ENCODE measurements at regions of chr10 and their contacts with region 1.

Region 1: DNA sequence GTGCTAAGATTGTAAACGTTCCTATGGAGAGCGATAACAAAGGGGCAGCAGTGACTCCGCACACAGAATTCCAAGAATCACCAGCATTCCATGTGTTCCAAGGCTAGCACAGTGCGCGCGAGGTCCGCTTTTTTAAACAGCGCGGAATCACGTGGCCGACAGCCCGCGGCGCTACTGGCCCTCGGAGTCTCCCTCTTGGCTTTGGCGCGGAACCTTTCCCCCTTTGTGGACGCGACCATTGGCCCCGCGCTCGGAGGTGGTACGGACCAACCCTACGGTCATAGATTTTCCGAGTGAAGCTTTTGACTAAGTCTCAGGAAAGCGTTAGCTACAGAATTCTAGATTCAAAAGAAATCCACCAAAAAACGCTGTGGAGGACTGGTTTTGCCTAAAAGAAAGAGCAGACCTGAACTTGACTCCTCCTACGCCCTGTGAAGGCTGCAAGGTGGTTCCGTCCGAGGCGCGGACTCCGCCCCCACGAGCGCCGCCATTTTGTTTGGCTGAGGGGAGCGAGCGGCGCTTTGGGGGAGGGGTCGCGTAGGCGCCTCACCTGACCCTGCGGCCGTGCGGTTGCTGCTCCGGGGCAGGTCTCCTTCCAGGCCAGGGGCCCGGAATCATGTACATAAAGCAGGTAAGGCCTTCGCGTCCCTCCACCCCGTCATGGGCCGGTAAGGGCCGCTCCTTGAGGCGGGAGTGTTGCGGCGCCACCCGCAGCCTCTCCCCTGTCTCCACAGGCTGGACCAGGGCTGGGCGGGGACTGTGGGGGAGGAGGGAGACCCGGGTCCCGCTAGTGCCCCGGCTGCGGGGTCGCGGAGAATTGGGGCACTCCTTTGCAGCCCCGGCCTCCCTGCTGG is at the start of gene SMC3:
- DNase-seq: peak; percentile 96
- H3K4me3 ChIP-seq: peak within 1 kb of the TSS; percentile 78
- CTCF ChIP-seq: no peak

Region 2: DNA sequence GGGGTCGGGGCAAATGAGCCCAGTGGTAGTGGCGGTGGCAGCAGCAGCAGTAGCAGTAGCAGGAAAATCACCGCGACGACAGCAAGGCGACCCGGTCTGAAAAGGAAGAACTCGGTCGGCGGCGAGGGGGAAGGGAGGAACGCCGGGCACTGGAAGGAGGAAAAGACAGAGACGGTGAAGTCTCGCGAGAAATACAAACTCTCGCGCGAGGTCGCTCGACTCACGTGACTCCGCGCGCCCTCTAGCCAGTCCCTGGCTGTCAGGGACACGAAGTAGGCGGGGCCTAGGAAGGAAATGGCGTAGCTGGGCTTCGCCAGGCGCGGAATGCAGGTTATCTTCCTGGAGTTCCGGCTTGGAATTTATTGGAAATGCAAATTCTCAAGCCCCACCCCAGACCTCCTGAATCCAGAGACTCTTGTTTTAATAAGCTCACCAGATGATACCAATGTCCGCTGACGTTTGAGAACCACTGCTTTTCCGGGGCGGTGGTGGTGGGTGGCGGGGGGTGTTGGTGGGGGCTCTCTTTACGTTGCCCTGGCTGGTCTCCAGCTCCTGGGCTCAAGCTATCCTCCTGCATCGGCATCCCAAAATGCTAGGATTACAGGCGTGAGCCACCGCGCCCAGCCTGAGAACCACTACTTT is 262.5 kb before region 1 on chr10 and contains the start of gene SMNDC1:
- in situ Hi-C with region 1: loop called (anchors 25 kb)
- DNase-seq: peak; percentile 99
- H3K4me3 ChIP-seq: peak within 1 kb of the TSS; percentile 92
- CTCF ChIP-seq: no peak

Region 3: DNA sequence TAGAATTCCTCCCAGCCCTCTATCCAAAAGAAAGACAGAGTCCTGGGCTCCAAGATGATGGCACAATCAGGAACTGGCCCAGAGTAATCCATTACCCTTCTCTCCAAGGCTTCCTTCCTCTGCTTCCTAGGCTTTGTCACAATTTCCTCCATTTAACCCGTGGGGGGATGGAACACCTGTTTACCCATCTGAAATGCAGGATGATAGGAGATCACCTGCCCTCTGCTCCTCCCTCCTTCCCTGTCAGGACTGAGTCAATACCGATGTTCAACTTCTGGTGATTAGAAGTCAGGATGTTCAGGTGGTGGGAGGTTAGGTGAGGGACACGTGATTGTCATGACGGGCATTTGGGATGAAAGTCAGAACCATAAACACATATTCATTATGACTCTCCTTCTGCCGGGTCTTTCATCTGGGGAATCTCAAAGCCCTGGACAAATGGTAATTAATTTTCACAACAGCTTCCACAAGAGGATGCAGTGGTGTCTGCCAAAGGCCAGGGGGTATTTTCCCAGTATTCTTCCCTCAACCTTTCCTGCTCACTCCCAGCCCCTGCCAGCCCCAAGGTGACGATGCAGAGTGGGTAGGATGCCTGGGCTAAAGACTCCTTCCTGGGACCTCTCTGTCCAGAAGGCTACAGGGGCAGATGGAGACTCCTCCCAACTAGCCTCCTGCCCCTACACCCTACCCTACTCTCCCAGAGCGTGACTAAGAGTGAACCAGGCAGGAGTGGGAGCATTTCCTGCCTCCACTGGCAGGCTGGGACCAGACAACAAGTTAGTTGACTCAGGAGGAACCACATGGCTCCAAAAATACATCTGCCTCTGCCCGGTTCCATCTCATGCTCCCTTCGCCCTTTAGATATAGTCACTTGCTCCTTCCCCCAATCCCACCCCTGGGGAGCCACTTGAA is 41.8 kb before region 1 on chr10:
- in situ Hi-C with region 1: no loop called
- DNase-seq: no peak
- H3K4me3 ChIP-seq: no peak overlapping the region
- CTCF ChIP-seq: no peak